ENCODE measurements at regions of chr3 and their contacts with region 1.

Region 1: GRCh38 chr3:39189959-39190269 is 2.5 kb downstream of the XIRP1 start:
- DNase-seq: peak; percentile 71
- H3K4me3 Mint-ChIP-seq: no peak overlapping the region
- H3K27ac Mint-ChIP-seq: no peak overlapping the region
- H3K4me1 Mint-ChIP-seq: peaks cover 2% of the 10 kb centered on the region
- H3K27me3 Mint-ChIP-seq: peaks cover 14% of the 10 kb centered on the region

Region 2: DNA sequence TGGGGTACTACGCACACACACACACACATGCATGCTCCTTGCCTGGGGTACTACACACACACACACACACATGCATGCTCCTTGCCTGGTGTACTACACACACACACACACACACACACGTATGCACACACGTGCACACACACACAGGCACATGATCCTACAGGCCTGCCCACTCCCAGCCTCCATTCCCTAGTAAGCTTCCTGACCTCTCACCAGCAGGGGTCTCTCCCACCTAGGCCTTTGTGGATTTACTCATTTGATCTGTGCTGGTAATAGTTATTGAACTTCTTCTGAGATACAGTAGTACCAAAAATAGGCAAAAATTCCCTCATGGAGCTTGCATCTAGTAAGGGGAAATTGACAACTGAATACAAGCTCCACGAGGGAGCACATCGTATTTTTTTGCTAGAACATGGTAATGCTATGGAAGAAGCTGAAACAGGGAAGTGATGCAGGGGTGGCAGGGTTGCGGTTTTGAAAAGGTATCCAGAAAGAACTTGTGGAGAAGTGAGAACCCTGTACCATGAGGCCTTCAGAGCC is 63.3 kb before region 1 on chr3:
- CTCF ChIA-PET with region 1: interaction called, 27 read pairs
- DNase-seq: peak; percentile 57
- H3K4me3 Mint-ChIP-seq: no peak overlapping the region
- H3K27ac Mint-ChIP-seq: peak overlapping the region; percentile 39
- H3K4me1 Mint-ChIP-seq: peaks cover 32% of the 10 kb centered on the region
- H3K27me3 Mint-ChIP-seq: peaks cover 20% of the 10 kb centered on the region

Region 3: DNA sequence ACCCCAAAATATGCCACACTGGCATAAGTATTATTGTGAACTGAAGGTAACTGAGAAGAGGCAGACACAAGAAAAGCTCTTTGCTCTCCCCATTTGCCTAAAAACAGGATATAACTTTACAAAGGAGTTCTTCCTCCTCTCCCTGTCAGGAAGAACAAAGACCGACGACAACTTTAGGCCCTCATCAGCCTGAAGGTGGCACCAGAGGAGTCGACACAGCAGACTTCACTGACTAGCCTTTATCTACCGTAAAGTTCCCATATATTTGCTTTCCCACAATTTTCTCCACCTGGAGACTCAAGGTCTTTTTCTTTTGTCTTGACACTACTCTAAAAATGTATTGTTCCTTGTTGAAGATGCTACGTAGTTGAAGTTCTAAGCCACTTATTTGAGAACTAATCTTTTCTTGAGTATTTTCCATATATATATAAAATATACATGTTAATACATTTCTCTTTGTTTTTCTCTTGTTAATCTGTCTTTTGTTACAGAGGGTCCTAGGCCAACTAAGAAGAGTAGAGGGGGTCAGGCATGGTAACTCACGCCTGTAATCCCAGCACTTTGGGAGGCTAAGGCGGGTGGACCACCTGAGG is 18.6 kb after region 1 on chr3:
- CTCF ChIA-PET with region 1: interaction called, 23 read pairs
- DNase-seq: peak; percentile 58
- H3K4me3 Mint-ChIP-seq: no peak overlapping the region
- H3K27ac Mint-ChIP-seq: no peak overlapping the region
- H3K4me1 Mint-ChIP-seq: peaks cover 13% of the 10 kb centered on the region
- H3K27me3 Mint-ChIP-seq: peaks cover 39% of the 10 kb centered on the region

Region 4: DNA sequence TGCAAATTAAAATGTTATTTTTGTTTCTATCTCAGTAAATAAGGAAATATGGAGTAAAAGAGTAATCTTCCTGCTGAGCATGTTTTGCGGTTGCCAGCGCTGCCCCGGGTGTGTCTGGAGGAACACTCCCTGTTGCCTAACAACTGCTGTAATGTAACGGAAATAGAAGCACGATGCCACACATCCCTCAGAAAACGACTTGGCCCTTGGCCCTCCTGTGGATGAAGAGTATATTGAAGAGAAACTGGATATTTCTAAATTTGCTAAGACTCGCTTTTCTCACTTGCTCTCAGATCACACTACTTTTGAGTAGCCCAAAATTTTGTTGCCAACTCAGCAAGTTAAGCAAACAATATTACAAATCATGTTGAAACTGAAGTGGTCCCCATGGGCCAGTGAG is 71.0 kb after region 1 on chr3:
- CTCF ChIA-PET with region 1: interaction called, 21 read pairs
- DNase-seq: peak; percentile 83
- H3K4me3 Mint-ChIP-seq: no peak overlapping the region
- H3K27ac Mint-ChIP-seq: no peak overlapping the region
- H3K4me1 Mint-ChIP-seq: peaks cover 35% of the 10 kb centered on the region
- H3K27me3 Mint-ChIP-seq: peaks cover 58% of the 10 kb centered on the region

Region 5: DNA sequence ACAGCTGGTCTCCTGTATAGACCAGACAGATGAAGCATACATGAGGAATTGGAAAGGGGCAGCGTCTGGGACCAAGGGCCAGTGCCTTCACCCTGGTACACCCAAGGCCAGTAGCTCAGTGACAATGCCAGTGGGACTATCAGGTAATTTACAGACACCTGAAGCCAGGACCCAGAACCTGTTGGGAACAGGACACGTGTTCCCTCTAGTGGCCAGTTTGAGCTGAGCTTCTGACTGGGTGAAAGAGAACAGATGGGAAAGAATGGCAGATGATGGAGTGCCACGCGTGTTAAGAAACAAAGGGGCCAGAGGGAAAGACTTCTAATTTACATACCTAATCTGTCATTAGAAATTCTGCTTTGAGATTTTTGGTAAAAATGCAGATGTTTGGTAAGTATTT is 188.2 kb after region 1 on chr3:
- CTCF ChIA-PET with region 1: interaction called, 26 read pairs
- DNase-seq: peak; percentile 78
- H3K4me3 Mint-ChIP-seq: no peak overlapping the region
- H3K27ac Mint-ChIP-seq: no peak overlapping the region
- H3K4me1 Mint-ChIP-seq: peaks cover 11% of the 10 kb centered on the region
- H3K27me3 Mint-ChIP-seq: peaks cover 5% of the 10 kb centered on the region

Measured in activated naive CD4-positive, alpha-beta T cell treated with anti-CD3 and anti-CD28 coated beads, Interleukin-2, amount 10 ng/mL, durations not matched to agents 7 days and 5 days (primary cell).